H1 (cell line): ENCODE measurements at regions of chr11 and their contacts with region 1.

Region 1: GRCh38 chr11:3091791-3092602 is 34.8 kb upstream of the CARS1 start:
- DNase-seq: peak; percentile 94 to 98
- H3K4me3 ChIP-seq: no peak overlapping the region
- H3K27ac ChIP-seq: no peak overlapping the region
- H3K4me1 ChIP-seq: peaks cover 0 to 20% (median 6%) of the 10 kb centered on the region in 4 experiments; a peak in 5 of 7 replicates
- H3K27me3 ChIP-seq: no peaks in the 10 kb centered on the region
- CTCF ChIP-seq: peak in 2 of 3 experiments; percentile 99; a peak in 3 of 4 replicates
- EP300 ChIP-seq: peak in 1 of 2 experiments; percentile 74; a peak in 1 of 3 replicates
- POLR2A ChIP-seq: no peak
- RAD21 ChIP-seq: peak; percentile 96 to 97

Region 2: GRCh38 chr11:2850371-2850770 is 241.6 kb before region 1 on chr11:
- CTCF ChIA-PET with region 1: no interaction called
- POLR2A ChIA-PET with region 1: no interaction called
- DNase-seq: no peak
- H3K4me3 ChIP-seq: no peak overlapping the region
- H3K27ac ChIP-seq: no peak overlapping the region
- H3K4me1 ChIP-seq: peaks cover 0 to 14% (median 6%) of the 10 kb centered on the region in 4 experiments; a peak in 6 of 7 replicates
- H3K27me3 ChIP-seq: peaks cover 0 to 13% (median 6%) of the 10 kb centered on the region in 4 experiments; a peak in 4 of 7 replicates
- CTCF ChIP-seq: no peak
- EP300 ChIP-seq: no peak
- POLR2A ChIP-seq: no peak
- RAD21 ChIP-seq: no peak

Region 3: DNA sequence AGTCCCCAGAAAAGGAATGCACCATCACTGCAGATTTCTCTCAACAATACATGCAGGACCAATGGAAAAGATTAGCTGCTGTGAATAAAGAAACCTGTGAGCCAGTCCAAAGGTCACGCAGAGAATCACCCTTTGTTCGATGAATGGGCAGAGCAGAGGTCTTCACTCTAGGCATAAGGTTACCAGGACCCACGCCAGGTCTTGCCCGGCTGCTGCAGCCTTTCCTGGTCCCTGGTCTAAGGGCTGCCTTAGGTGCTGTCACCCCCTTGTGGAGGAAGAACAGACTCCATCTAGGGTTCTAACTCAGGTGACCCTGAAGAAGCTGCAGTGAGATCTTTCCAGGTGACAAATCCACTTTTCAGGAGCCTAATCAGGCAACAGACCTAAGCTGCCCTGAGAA is 70.9 kb before region 1 on chr11:
- CTCF ChIA-PET with region 1: interaction called, 14 read pairs
- POLR2A ChIA-PET with region 1: interaction called, 3 read pairs
- DNase-seq: no peak
- H3K4me3 ChIP-seq: no peak overlapping the region
- H3K27ac ChIP-seq: no peak overlapping the region
- H3K4me1 ChIP-seq: no peaks in the 10 kb centered on the region
- H3K27me3 ChIP-seq: no peaks in the 10 kb centered on the region
- CTCF ChIP-seq: peak; percentile 57 to 82 (median 78)
- EP300 ChIP-seq: no peak
- POLR2A ChIP-seq: no peak; a peak in 1 of 3 replicates
- RAD21 ChIP-seq: peak; percentile 72 to 79

Region 4: GRCh38 chr11:3049430-3050243 is 42.4 kb before region 1 on chr11:
- CTCF ChIA-PET with region 1: interaction called, 434 read pairs
- POLR2A ChIA-PET with region 1: interaction called, 6 read pairs
- DNase-seq: no peak
- H3K4me3 ChIP-seq: no peak overlapping the region
- H3K27ac ChIP-seq: no peak overlapping the region
- H3K4me1 ChIP-seq: peaks cover 0 to 13% (median 6%) of the 10 kb centered on the region in 4 experiments; a peak in 5 of 7 replicates
- H3K27me3 ChIP-seq: no peaks in the 10 kb centered on the region
- CTCF ChIP-seq: no peak
- EP300 ChIP-seq: no peak
- POLR2A ChIP-seq: no peak
- RAD21 ChIP-seq: no peak

Region 5: DNA sequence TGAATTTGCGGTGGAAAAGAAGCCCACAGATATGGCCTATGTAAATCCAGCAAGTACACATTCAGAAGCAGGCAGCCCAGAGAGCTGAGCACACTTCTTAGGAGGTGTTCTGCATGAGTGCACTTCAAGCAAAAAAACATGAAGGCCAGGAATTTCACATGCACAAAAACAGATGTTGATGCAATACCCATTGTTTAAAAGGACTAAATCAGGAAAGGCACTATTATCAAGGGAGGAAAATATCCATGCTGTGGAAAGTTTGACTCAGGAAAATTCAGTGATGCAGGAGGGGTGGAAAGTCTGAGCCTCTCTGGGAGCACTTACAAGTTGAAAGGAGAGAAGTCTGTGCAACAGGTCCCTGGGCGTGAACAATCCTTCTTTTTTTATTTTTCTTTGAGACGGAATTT is 19.0 kb before region 1 on chr11:
- CTCF ChIA-PET with region 1: interaction called, 50 read pairs
- POLR2A ChIA-PET with region 1: no interaction called
- DNase-seq: no peak
- H3K4me3 ChIP-seq: no peak overlapping the region
- H3K27ac ChIP-seq: no peak overlapping the region
- H3K4me1 ChIP-seq: no peaks in the 10 kb centered on the region
- H3K27me3 ChIP-seq: no peaks in the 10 kb centered on the region
- CTCF ChIP-seq: no peak
- EP300 ChIP-seq: no peak
- POLR2A ChIP-seq: no peak
- RAD21 ChIP-seq: no peak

Region 6: GRCh38 chr11:3135481-3136440 is 43.8 kb after region 1 on chr11:
- CTCF ChIA-PET with region 1: interaction called, 12 read pairs
- POLR2A ChIA-PET with region 1: interaction called, 3 read pairs
- DNase-seq: no peak
- H3K4me3 ChIP-seq: no peak overlapping the region
- H3K27ac ChIP-seq: no peak overlapping the region
- H3K4me1 ChIP-seq: peaks cover 0 to 9% (median 5%) of the 10 kb centered on the region in 4 experiments; a peak in 4 of 7 replicates
- H3K27me3 ChIP-seq: no peaks in the 10 kb centered on the region
- CTCF ChIP-seq: peak in 2 of 3 experiments; percentile 63 to 70; a peak in 3 of 4 replicates
- EP300 ChIP-seq: no peak
- POLR2A ChIP-seq: no peak
- RAD21 ChIP-seq: peak; percentile 46 to 68

Region 7: DNA sequence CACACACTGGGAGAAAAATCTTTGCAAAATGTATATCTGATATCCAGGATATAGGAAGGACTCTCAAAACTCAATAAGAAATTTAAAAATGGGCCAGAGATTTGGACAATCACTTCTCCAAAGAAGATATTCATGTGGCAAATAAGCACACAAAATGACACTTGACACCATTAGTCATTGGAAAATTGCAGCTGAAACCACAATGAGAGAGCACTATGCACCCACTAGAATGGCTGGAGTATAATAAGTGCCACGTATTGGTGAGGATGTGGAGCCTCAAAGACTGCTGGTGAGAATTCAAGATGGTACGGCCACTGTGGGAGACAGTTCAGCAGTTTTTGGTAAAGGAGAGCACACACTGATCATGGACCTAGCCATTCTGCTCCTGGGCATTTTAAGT is 85.9 kb after region 1 on chr11:
- CTCF ChIA-PET with region 1: no interaction called
- POLR2A ChIA-PET with region 1: no interaction called
- DNase-seq: no peak
- H3K4me3 ChIP-seq: no peak overlapping the region
- H3K27ac ChIP-seq: no peak overlapping the region
- H3K4me1 ChIP-seq: no peaks in the 10 kb centered on the region
- H3K27me3 ChIP-seq: no peaks in the 10 kb centered on the region
- CTCF ChIP-seq: no peak
- EP300 ChIP-seq: no peak
- POLR2A ChIP-seq: no peak
- RAD21 ChIP-seq: no peak